Activated T-helper 2 cell treated with anti-CD3 and anti-CD28 coated beads, Interferon-gamma antibody, Interleukin-2, Interleukin-4, amounts not matched to agents 10 μg/mL and 5 μg/mL and 100 μg/mL, durations not matched to agents 14 hours and 24 hours and 36 hours (primary cell): ENCODE measurements at regions of chr2 and their contacts with region 1.

Region 1: DNA sequence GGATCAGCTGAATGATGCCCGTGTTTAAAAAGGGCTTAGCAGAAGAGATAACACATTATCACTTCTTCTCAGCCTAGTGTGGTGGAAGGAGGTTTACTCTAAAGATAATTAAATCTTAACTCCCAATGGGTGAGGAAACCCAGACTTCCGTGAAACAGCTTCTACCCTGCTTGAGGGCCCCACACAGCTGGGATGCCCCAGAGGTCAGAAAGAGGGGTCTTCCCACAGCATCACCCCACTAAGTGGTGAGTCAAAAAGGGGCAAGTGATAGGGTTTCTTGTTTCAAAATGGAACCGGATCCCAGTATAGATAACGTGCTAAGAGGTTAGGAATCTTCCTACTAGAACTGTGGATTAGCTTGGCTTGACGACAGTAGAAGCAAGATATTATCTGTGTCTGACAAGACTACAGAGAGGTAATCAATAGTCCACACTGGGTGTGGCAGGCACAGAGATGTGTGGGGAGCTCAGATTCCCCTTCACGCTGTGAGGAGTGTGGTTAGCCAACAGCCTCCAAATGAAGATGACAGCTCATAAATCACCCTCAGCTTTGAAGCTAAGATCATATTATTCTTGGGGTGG is 129.6 kb upstream of the COPS8 start:
- DNase-seq: no peak
- H3K4me3 Mint-ChIP-seq: no peak overlapping the region
- H3K27ac Mint-ChIP-seq: no peak overlapping the region
- H3K4me1 Mint-ChIP-seq: peaks cover 15% of the 10 kb centered on the region
- H3K27me3 Mint-ChIP-seq: peaks cover 3% of the 10 kb centered on the region

Region 2: GRCh38 chr2:236928380-236929037 is 27.6 kb before region 1 on chr2:
- intact Hi-C with region 1: loop called (anchors 1 kb)
- DNase-seq: no peak
- H3K4me3 Mint-ChIP-seq: peak overlapping the region; percentile 59
- H3K27ac Mint-ChIP-seq: no peak overlapping the region
- H3K4me1 Mint-ChIP-seq: peaks cover 4% of the 10 kb centered on the region
- H3K27me3 Mint-ChIP-seq: peaks cover 32% of the 10 kb centered on the region

Region 3: GRCh38 chr2:236942554-236942953 is 13.6 kb before region 1 on chr2:
- intact Hi-C with region 1: loop called (anchors 1 kb)
- DNase-seq: no peak
- H3K4me3 Mint-ChIP-seq: no peak overlapping the region
- H3K27ac Mint-ChIP-seq: no peak overlapping the region
- H3K4me1 Mint-ChIP-seq: peaks cover 2% of the 10 kb centered on the region
- H3K27me3 Mint-ChIP-seq: peaks cover 6% of the 10 kb centered on the region